ENCODE measurements at regions of chr1 and their contacts with region 1.

Region 1: GRCh38 chr1:205396967-205397616 is 24.8 kb downstream of the LEMD1 start:
- DNase-seq: peak; percentile 38
- ATAC-seq: no peak
- H3K4me3 Mint-ChIP-seq: no peak overlapping the region
- H3K27ac Mint-ChIP-seq: no peak overlapping the region
- H3K4me1 Mint-ChIP-seq: no peaks in the 10 kb centered on the region
- H3K27me3 Mint-ChIP-seq: peaks cover 23% of the 10 kb centered on the region

Region 2: DNA sequence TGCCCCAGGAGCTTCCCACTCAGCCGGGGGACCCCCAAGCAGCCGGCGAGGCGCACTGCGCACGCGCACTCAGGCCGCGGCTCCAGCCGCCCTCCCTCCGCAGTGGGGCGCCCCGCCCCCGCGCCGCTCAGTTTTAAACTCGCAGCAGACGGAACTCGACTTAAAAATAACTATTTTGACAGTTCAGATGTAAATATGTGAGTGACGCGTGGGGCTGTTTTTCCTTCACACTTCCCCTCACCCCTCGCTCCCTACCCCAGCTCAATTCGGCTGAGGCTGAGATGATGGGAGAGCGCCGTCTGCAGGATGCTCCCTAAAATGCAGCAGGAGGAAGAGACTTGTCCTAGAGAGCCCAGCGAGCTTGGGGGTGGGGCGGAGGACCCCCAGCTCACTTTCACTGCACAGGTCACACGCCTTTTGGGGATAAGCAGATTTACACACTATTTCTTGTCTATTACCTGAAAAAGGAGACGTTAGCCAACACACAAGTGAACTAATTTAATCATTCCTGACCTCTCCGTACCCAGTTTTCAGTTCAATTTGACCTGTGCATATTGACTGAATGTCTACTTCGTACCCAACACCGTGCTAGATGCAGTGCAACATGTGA is 33.7 kb after region 1 on chr1:
- CTCF ChIA-PET with region 1: interaction called, 19 read pairs
- POLR2A ChIA-PET with region 1: no interaction called
- DNase-seq: peak; percentile 64
- ATAC-seq: peak; percentile 75
- H3K4me3 Mint-ChIP-seq: peak overlapping the region; percentile 74
- H3K27ac Mint-ChIP-seq: peak overlapping the region; percentile 32
- H3K4me1 Mint-ChIP-seq: peaks cover 11% of the 10 kb centered on the region
- H3K27me3 Mint-ChIP-seq: peaks cover 25% of the 10 kb centered on the region

Region 3: DNA sequence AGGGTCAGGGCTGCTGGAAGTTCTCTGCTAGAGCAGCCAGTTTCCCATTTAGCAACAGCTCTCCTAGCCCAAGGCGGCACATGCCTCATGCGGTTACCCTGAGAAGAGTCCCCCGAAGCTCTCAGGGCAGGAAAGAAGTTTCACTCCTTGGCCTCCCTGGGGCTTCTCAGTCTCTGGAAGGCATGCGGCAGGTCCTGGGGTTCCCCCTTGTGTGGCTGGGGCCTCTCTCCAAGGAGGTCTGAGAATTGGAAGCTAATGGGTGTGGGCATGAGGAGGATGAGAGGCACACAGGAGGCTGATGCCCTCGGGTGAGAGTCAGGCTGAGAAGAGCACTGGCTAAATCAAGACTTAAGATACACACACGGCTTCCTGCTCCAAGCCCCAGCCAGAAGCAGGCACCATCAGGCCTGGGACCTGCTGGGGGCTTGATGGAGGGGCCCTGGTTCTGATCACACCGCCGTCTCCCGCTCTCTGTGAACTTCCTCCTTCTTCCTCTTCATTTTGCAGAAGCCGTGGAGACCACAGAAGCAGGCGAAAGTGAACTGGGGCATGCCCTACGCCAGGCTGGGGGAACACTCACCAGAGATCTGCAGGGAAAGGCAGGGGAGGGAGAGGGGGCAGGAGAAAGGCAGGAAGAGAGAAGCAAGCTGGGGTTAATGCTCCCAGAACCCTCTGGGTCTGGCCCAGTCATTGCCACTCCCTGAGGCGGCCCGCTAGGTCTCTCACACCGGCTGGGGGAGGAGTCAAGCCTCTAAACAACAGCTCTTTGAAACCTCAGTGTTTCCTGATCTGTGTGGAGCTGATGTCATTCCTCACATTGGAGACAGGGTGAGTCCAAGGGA is 43.6 kb after region 1 on chr1:
- CTCF ChIA-PET with region 1: interaction called, 10 read pairs
- POLR2A ChIA-PET with region 1: no interaction called
- DNase-seq: peak; percentile 85
- ATAC-seq: peak; percentile 96
- H3K4me3 Mint-ChIP-seq: peak overlapping the region; percentile 75
- H3K27ac Mint-ChIP-seq: peak overlapping the region; percentile 89
- H3K4me1 Mint-ChIP-seq: peaks cover 26% of the 10 kb centered on the region
- H3K27me3 Mint-ChIP-seq: peaks cover 9% of the 10 kb centered on the region

Measured in activated CD8-positive, alpha-beta T cell treated with anti-CD3 and anti-CD28 coated beads, Interleukin-2, amount 10 ng/mL, durations not matched to agents 7 days and 5 days (primary cell).